ENCODE measurements at regions of chr1 and their contacts with region 1.

Region 1: GRCh38 chr1:212179394-212180076 is 105.7 kb upstream of the PPP2R5A start:
- DNase-seq: peak; percentile 98
- H3K4me3 ChIP-seq: no peak overlapping the region
- H3K27ac ChIP-seq: peak overlapping the region; percentile 86
- H3K4me1 ChIP-seq: peaks cover 19% of the 10 kb centered on the region
- H3K27me3 ChIP-seq: no peaks in the 10 kb centered on the region
- CTCF ChIP-seq: no peak

Region 2: GRCh38 chr1:212234431-212235395 is 55.2 kb after region 1 on chr1:
- CTCF ChIA-PET with region 1: no interaction called
- dilution Hi-C with region 1: no loop called
- in situ Hi-C with region 1: no loop called
- intact Hi-C with region 1: loop called (anchors 5 kb)
- DNase-seq: peak; percentile 95
- H3K4me3 ChIP-seq: no peak overlapping the region
- H3K27ac ChIP-seq: peak overlapping the region; percentile 39
- H3K4me1 ChIP-seq: peaks cover 22% of the 10 kb centered on the region
- H3K27me3 ChIP-seq: no peaks in the 10 kb centered on the region
- CTCF ChIP-seq: no peak

Region 3: GRCh38 chr1:212284744-212285684 is 105.5 kb after region 1 on chr1 and contains the start of gene PPP2R5A:
- CTCF ChIA-PET with region 1: interaction called, 5 read pairs
- dilution Hi-C with region 1: no loop called
- in situ Hi-C with region 1: no loop called
- intact Hi-C with region 1: loop called (anchors 1 kb)
- DNase-seq: peak; percentile 99
- H3K4me3 ChIP-seq: peak within 1 kb of the TSS; percentile 63 to 95 (median 92)
- H3K27ac ChIP-seq: peak within 1 kb of the TSS; percentile 92
- H3K4me1 ChIP-seq: peaks cover 22% of the 10 kb centered on the region
- H3K27me3 ChIP-seq: no peaks in the 10 kb centered on the region
- CTCF ChIP-seq: peak in 1 of 2 donors; percentile 28
- total RNA-seq, gene PPP2R5A: 17.3 to 19.0 TPM